GM12878 (cell line): ENCODE measurements at regions of chr11 and their contacts with region 1.

Region 1: DNA sequence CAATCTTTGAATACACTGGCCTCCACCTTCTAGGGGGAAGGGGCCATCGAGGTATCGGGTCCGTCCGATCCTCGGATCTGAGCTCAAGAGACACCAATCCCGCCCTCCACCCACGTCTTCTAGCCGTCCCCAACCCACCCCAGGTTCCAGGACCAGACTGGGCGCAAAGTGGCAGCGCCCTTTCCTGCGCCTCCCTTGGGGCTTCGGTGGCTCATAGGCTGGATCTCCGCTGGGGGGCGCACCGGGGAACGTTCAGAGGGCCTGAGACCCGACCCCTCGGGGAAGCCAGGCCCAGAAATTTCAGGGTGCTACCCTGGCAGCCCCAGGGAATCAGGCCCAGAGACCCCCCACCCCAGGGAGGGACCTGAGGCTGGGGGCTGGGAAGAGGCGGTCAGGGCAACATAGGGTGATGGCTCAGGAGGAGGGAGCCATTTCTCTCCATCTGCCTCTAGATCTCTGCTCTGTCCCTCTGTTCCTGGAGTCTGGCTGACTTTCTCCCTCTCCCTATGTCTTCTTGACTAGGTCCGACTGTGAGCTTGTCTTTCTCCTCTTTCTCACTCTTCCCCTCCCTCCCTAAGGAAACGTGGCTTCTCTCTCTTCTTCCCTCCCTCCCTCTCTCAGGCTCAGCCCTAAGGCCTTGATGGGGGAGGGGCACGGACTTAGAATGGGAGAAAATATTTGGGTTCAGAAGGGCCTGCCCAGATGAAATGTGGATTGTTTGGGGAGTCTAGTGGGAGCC is 1.1 kb downstream of the CREB3L1 start:
- DNase-seq: no peak
- ATAC-seq: peak; percentile 71
- H3K4me3 ChIP-seq: peak overlapping the region; percentile 70
- H3K27ac ChIP-seq: peak overlapping the region; percentile 42; the same call in 1 of the 2 replicates
- H3K4me1 ChIP-seq: 0 out of 2 replicates have a peak, but pooled peaks cover 5% of the 10 kb centered on the region
- H3K27me3 ChIP-seq: 0 out of 4 replicates have a peak, but pooled peaks cover 2 to 7% of the 10 kb centered on the region in 2 experiments
- CTCF ChIP-seq: peak; percentile 43 to 62 (median 44); a peak in 5 of 6 replicates
- EP300 ChIP-seq: no peak
- POLR2A ChIP-seq: no peak
- RAD21 ChIP-seq: no peak

Region 2: DNA sequence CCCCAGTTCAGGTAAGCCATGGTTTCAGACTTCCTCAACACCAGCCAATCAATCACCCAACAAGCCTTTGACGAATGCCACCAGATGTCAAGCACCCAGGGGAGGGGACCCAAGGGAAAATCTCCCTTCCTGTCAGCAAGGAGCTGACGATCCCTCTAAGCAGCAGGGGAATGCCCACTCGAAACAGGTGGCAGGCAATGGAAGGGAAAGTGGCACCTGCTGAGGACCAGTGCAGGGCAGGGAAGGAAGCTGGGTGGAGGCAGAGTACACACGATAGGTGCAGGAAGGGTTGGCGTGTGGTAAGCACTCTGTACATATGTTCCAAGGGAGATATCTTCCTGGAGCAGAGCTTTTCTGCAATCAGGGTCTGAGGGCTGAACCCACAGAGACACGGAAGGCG is 12.8 kb before region 1 on chr11:
- CTCF ChIA-PET with region 1: interaction called, 13 read pairs
- POLR2A ChIA-PET with region 1: interaction called, 6 read pairs
- RAD21 ChIA-PET with region 1: interaction called, 16 read pairs
- SMC1A ChIA-PET with region 1: interaction called, 9 read pairs
- in situ Hi-C with region 1: no loop called
- intact Hi-C with region 1: no loop called
- DNase-seq: peak; percentile 47
- ATAC-seq: peak; percentile 58
- H3K4me3 ChIP-seq: no peak overlapping the region
- H3K27ac ChIP-seq: peak overlapping the region; percentile 61
- H3K4me1 ChIP-seq: peaks cover 33% of the 10 kb centered on the region
- H3K27me3 ChIP-seq: no peaks in the 10 kb centered on the region
- CTCF ChIP-seq: peak in 1 of 3 experiments; percentile 53; a peak in 2 of 6 replicates
- EP300 ChIP-seq: no peak
- POLR2A ChIP-seq: no peak
- RAD21 ChIP-seq: no peak

Region 3: DNA sequence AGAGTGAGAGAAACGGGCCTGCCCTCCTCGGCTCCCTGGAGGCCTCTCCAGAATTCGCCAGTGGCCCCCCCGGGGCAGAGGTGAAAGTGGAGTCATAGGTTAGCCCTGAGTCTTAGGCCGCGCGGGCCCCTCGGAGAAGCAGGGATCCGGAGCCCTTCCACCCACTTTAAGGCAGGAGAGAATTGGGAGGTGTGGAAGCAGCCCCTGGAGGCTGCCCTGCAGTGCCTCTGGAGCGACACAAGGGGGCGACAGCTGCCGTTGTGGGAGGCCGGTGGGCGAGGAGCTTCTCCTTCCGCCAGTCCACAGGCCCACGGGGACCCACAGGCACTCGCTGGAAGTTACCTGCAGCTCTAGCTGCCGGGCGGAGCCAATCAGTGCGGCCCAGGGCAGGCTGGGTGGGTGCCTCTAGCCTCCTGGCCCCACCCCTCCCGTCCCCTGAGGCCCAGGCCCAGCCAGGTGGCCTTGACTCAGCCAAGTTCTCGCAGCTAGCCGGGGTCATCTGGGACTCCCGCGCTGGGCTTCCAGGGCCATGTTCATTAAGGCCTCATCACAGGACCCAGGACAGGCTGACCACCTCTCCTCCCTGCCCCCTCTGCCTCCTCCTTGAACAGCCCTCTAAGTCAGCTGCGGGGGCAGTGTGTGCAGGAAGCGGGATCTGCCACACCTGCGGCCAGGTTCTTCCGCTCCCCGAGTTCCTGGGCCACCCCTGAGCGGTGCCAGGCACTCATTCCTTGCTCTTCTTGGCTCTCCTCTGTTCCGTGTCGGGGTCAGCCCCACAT is 73.7 kb after region 1 on chr11:
- CTCF ChIA-PET with region 1: no interaction called
- POLR2A ChIA-PET with region 1: no interaction called
- RAD21 ChIA-PET with region 1: no interaction called
- SMC1A ChIA-PET with region 1: no interaction called
- in situ Hi-C with region 1: no loop called
- intact Hi-C with region 1: no loop called
- DNase-seq: no peak
- ATAC-seq: peak; percentile 29
- H3K4me3 ChIP-seq: no peak overlapping the region
- H3K27ac ChIP-seq: no peak overlapping the region
- H3K4me1 ChIP-seq: peaks cover 30% of the 10 kb centered on the region
- H3K27me3 ChIP-seq: no peaks in the 10 kb centered on the region
- CTCF ChIP-seq: peak; percentile 86 to 97 (median 87)
- EP300 ChIP-seq: no peak
- POLR2A ChIP-seq: no peak
- RAD21 ChIP-seq: peak; percentile 50